ENCODE measurements at regions of chr17 and their contacts with region 1.

Region 1: GRCh38 chr17:39244600-39245570 is 19.1 kb upstream of the STAC2 start:
- DNase-seq: peak; percentile 100
- H3K4me3 Mint-ChIP-seq: no peak overlapping the region
- H3K27ac Mint-ChIP-seq: peak overlapping the region; percentile 3
- H3K4me1 Mint-ChIP-seq: peaks cover 15% of the 10 kb centered on the region
- H3K27me3 Mint-ChIP-seq: peaks cover 26% of the 10 kb centered on the region
- CTCF ChIP-seq: peak; percentile 100

Region 2: DNA sequence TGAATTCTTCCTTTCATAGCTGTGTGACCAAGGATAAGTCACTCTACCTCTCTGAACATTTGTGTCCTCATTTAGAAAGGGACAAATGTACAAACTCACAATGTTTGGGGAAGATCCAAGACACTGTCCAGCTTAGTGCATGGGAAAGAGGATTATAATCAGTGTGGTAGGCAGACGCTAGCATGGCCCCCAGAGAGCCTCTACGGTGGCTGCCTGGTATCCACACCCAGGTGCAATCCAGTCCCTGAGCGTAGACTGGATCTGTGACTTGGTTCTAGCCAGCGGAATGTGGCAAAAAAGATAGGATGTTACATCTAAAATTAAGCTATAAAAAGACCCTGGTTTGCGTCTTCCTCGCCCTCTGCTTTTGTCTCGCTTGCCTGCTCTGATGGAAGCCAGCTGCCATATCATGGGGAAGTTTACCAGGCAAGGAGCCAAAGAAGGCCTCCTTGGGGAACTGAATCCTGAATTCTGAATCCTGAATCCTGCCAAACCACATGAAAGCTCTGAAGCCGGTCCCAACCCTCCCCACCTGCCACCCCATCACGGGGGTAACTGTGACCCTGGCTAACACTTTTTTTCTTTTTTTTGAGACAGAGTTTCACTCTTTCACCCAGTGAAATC is 145.1 kb before region 1 on chr17:
- CTCF ChIA-PET with region 1: no interaction called
- intact Hi-C with region 1: no loop called
- DNase-seq: no peak
- H3K4me3 Mint-ChIP-seq: no peak overlapping the region
- H3K27ac Mint-ChIP-seq: no peak overlapping the region
- H3K4me1 Mint-ChIP-seq: no peaks in the 10 kb centered on the region
- H3K27me3 Mint-ChIP-seq: peaks cover 51% of the 10 kb centered on the region
- CTCF ChIP-seq: no peak

Region 3: DNA sequence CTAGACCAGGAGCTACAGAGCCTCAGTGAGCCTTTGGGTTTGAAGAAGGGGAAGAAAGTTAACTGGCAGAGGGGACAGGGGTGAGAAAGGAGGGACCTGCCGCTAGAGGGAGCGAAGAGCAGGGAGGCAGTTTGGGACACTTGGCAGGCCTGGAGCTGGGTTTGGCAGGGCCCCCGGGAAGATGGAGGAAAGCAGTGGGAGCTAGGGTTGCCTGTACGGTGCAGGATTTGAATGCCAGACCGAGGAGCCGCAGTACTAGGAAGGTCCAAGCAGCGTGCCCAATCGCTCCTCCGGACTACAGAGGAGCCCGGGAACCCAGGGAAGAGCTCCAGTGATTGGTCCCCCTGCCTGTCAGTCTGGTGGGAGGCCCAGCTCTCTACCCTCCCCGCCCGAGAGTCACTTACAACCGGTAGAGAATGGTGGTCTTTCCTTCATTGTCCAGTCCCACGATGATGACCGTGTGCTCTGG is 80.2 kb before region 1 on chr17:
- CTCF ChIA-PET with region 1: interaction called, 87 read pairs
- intact Hi-C with region 1: no loop called
- DNase-seq: peak; percentile 99
- H3K4me3 Mint-ChIP-seq: peak overlapping the region; percentile 6
- H3K27ac Mint-ChIP-seq: no peak overlapping the region
- H3K4me1 Mint-ChIP-seq: peaks cover 12% of the 10 kb centered on the region
- H3K27me3 Mint-ChIP-seq: peaks cover 80% of the 10 kb centered on the region
- CTCF ChIP-seq: peak; percentile 100

Region 4: GRCh38 chr17:39194089-39194984 is 50.5 kb before region 1 on chr17:
- CTCF ChIA-PET with region 1: interaction called, 32 read pairs
- intact Hi-C with region 1: no loop called
- DNase-seq: peak; percentile 79
- H3K4me3 Mint-ChIP-seq: no peak overlapping the region
- H3K27ac Mint-ChIP-seq: no peak overlapping the region
- H3K4me1 Mint-ChIP-seq: peaks cover 13% of the 10 kb centered on the region
- H3K27me3 Mint-ChIP-seq: no peaks in the 10 kb centered on the region
- CTCF ChIP-seq: peak; percentile 83

Region 5: DNA sequence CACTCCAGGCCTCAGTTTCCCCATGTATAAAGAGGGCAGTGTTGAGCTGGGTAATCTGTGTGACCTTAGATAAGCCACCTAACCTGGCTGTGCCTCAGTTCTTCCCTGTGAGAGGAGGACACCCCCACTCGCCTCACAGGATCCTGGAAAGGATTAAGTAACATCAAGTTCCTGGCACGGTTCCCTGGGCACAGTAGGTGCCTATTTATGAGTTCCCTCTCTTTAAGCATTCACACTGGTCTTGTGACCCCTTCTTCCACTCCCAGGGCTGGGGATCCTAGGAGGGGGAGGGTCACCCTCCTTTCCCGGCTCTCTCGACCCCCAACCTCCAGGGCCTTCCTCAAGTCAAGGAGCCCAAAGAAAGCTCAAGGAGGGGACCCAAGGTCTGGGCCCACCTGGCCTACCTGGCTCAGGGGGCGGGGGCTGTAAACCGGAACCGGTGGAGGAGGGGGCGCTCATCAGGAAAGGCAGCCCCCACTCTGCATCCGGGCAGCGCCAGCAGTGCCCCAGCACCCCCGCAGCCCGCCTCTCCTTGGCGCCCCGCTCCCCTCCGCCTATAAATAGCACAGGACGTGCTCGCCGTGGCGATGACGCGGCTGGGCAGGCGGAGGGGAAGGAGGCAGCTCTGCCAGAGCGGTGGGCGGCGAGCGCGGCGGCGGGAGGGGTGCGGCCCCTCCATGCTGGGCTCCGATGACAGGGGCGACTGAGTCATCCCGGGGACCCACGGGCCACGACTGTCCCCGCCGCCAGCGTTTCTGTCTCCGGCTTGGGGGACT is 35.4 kb before region 1 on chr17:
- CTCF ChIA-PET with region 1: interaction called, 442 read pairs
- intact Hi-C with region 1: loop called (anchors 1 kb)
- DNase-seq: peak; percentile 81
- H3K4me3 Mint-ChIP-seq: peak overlapping the region; percentile 55
- H3K27ac Mint-ChIP-seq: peak overlapping the region; percentile 16
- H3K4me1 Mint-ChIP-seq: peaks cover 43% of the 10 kb centered on the region
- H3K27me3 Mint-ChIP-seq: peaks cover 63% of the 10 kb centered on the region
- CTCF ChIP-seq: peak; percentile 13

Region 6: GRCh38 chr17:39227364-39227919 is 17.4 kb before region 1 on chr17:
- CTCF ChIA-PET with region 1: interaction called, 35 read pairs
- intact Hi-C with region 1: no loop called
- DNase-seq: no peak
- H3K4me3 Mint-ChIP-seq: no peak overlapping the region
- H3K27ac Mint-ChIP-seq: no peak overlapping the region
- H3K4me1 Mint-ChIP-seq: peaks cover 26% of the 10 kb centered on the region
- H3K27me3 Mint-ChIP-seq: peaks cover 87% of the 10 kb centered on the region
- CTCF ChIP-seq: no peak

Region 7: DNA sequence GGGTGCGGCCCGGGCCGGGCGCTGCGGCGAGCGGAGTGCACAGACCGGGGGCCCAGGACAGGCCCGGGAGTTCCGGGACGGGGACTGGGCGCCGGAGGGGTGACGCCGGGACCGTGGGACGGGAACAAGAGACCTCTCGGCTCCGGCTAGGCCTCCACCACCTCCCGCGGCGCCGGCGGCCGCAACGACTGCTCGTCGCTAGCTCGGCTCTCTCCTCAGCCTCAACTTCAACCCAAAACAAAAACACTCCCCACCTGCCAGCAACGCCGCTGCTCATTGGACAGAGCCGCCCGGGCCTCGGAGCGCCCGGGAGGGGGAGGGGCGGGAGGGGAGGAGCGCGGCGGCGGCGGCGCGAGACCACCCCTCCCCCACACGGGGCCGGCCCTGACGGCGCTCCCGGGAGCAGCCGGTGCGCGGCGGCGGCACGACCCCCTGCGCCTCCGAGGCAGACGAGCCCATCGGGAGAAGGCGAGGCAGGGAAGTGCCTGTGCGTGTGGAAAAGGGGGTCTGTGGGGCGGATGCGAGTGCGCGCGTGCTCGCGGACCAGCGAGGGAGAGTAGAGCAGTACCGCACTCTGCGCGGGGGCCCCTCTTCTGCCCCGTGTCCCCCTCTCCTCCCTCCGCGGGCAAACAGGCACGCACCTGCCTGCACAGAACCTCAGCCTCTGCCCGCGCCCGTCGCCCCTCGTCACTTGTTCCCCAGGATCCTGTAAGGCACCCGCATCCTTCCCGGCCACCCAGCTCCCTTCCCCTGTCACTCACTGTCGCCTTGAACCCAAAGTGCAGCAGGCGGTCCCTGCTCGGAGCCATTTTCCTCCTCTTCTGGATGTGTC is 156.7 kb after region 1 on chr17 and contains the start of gene FBXL20:
- CTCF ChIA-PET with region 1: interaction called, 13 read pairs
- intact Hi-C with region 1: no loop called
- DNase-seq: peak; percentile 100
- H3K4me3 Mint-ChIP-seq: peak within 1 kb of the TSS; percentile 89
- H3K27ac Mint-ChIP-seq: peak within 1 kb of the TSS; percentile 98
- H3K4me1 Mint-ChIP-seq: peaks cover 40% of the 10 kb centered on the region
- H3K27me3 Mint-ChIP-seq: no peaks in the 10 kb centered on the region
- CTCF ChIP-seq: no peak
- total RNA-seq, gene FBXL20: 70.3 and 71.5 TPM in 2 replicates

Measured in Calu3 (cell line).